CD4-positive, alpha-beta T cell (primary cell): ENCODE measurements at regions of chr15 and their contacts with region 1.

Region 1: GRCh38 chr15:63539521-63539920 is 35.1 kb downstream of the USP3 start:
- DNase-seq: peak in 3 of 14 experiments; percentile 28 to 30 (median 30)
- ATAC-seq: no peak
- H3K4me3 ChIP-seq: no peak overlapping the region
- H3K4me3 Mint-ChIP-seq: no peak overlapping the region
- H3K27ac ChIP-seq: no peak overlapping the region
- H3K27ac Mint-ChIP-seq: no peak overlapping the region
- H3K4me1 ChIP-seq: peaks cover 7% of the 10 kb centered on the region
- H3K4me1 Mint-ChIP-seq: peaks cover 69% of the 10 kb centered on the region
- H3K27me3 ChIP-seq: no peaks in the 10 kb centered on the region
- H3K27me3 Mint-ChIP-seq: no peaks in the 10 kb centered on the region
- CTCF ChIP-seq: no peak

Region 2: DNA sequence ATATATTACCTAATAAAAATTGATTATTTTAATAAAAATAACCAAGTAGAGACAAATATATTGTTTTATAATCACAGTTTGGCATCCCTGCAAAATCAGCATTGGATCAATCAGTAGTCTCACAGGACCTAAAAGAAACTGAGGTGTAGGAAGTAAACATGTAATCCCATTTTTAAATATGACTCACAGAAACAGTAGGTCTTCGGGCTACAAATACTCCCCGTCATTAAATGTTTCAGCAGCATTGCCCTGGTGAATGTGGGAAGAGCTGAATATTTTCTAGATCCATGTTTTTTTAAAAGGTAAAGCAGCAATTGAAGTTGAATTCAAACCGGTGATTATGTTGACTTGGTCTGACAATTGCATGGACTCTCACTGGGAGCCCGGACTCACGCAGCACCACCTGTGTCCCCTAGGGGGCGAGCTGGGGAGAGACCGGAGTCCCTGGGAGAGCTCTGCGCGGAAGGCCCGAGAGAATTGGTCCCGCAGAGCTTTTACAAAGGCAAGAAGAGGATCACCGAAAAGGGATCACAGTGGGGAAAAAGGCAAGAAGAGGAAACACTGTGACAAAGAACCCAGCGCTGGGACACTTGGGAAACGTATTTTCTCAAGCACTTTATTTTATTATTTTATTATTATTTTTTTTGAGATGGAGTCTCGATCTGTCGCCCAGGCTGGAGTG is 52.3 kb before region 1 on chr15:
- CTCF ChIA-PET with region 1: interaction called, 10 read pairs
- POLR2A ChIA-PET with region 1: interaction called, 4 read pairs
- intact Hi-C with region 1: no loop called
- DNase-seq: peak; percentile 79 to 93 (median 88)
- ATAC-seq: peak; percentile 90
- H3K4me3 ChIP-seq: no peak overlapping the region
- H3K4me3 Mint-ChIP-seq: peak overlapping the region; percentile 2
- H3K27ac ChIP-seq: peak overlapping the region in 1 of 2 donors; percentile 33
- H3K27ac Mint-ChIP-seq: peak overlapping the region; percentile 29
- H3K4me1 ChIP-seq: peaks cover 67% of the 10 kb centered on the region
- H3K4me1 Mint-ChIP-seq: peaks cover 67% of the 10 kb centered on the region
- H3K27me3 ChIP-seq: no peaks in the 10 kb centered on the region
- H3K27me3 Mint-ChIP-seq: no peaks in the 10 kb centered on the region
- CTCF ChIP-seq: peak; percentile 96

Region 3: GRCh38 chr15:63582718-63583426 is 43.4 kb after region 1 on chr15:
- CTCF ChIA-PET with region 1: no interaction called
- POLR2A ChIA-PET with region 1: no interaction called
- intact Hi-C with region 1: loop called in 1 of 2 experiments (anchors 5 kb)
- DNase-seq: no peak
- ATAC-seq: peak; percentile 24
- H3K4me3 ChIP-seq: no peak overlapping the region
- H3K4me3 Mint-ChIP-seq: no peak overlapping the region
- H3K27ac ChIP-seq: no peak overlapping the region
- H3K27ac Mint-ChIP-seq: peak overlapping the region; percentile 32
- H3K4me1 ChIP-seq: no peaks in the 10 kb centered on the region
- H3K4me1 Mint-ChIP-seq: peaks cover 25% of the 10 kb centered on the region
- H3K27me3 ChIP-seq: no peaks in the 10 kb centered on the region
- H3K27me3 Mint-ChIP-seq: no peaks in the 10 kb centered on the region
- CTCF ChIP-seq: no peak

Region 4: GRCh38 chr15:63698692-63699091 is 159.2 kb after region 1 on chr15:
- CTCF ChIA-PET with region 1: no interaction called
- POLR2A ChIA-PET with region 1: no interaction called
- intact Hi-C with region 1: no loop called
- DNase-seq: no peak
- ATAC-seq: no peak
- H3K4me3 ChIP-seq: no peak overlapping the region
- H3K4me3 Mint-ChIP-seq: no peak overlapping the region
- H3K27ac ChIP-seq: no peak overlapping the region
- H3K27ac Mint-ChIP-seq: no peak overlapping the region
- H3K4me1 ChIP-seq: no peaks in the 10 kb centered on the region
- H3K4me1 Mint-ChIP-seq: peaks cover 9% of the 10 kb centered on the region
- H3K27me3 ChIP-seq: no peaks in the 10 kb centered on the region
- H3K27me3 Mint-ChIP-seq: no peaks in the 10 kb centered on the region
- CTCF ChIP-seq: no peak